ENCODE measurements at regions of chr2 and their contacts with region 1.

Region 1: GRCh38 chr2:55268907-55269644 is at the start of gene MTIF2:
- DNase-seq: peak; percentile 94
- ATAC-seq: peak; percentile 95
- H3K4me3 Mint-ChIP-seq: peak within 1 kb of the TSS; percentile 96
- H3K27ac Mint-ChIP-seq: peak within 1 kb of the TSS; percentile 95
- H3K4me1 Mint-ChIP-seq: peaks cover 10% of the 10 kb centered on the region
- H3K27me3 Mint-ChIP-seq: no peaks in the 10 kb centered on the region
- total RNA-seq, gene MTIF2: 37.3 to 43.2 TPM

Region 2: DNA sequence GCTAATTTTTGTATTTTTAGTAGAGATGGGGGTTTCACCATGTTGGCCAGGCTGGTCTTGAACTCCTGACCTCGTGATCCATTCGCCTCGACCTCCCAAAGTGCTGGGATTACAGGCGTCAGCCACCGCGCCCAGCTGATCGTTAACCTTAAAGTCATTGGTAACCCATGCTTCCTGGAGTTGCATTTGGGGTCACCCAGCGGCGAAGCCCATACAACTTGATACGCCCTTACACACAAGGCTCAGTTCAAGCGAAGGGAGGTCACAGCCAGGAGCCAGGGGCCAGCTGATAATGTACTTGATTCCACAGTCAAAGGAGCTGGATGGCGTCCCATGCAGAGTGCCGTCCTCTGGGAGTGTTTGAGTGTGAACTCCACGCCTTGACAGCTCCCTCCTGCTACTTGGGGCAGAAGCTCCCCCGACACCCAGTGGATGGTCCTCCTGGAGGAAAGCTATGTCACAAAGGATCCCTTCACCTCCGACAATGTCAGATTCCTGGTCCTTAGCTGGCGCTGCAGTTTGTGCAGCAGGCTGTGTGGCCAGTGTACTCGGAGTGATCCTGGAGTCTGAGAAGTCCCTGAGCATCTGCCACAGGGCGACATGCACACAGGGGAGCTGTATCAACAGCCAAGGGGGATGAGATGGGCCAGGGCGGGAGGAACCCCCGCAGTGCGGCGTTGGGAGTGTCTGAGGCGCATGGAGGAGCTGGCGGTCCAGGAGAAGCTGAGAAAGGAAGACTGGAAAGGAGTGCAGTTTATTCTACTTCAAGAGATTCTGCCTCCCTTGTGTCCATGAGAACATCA is 44.9 kb before region 1 on chr2:
- CTCF ChIA-PET with region 1: no interaction called
- POLR2A ChIA-PET with region 1: no interaction called
- intact Hi-C with region 1: loop called in 1 of 2 experiments (anchors 2 kb)
- DNase-seq: no peak
- ATAC-seq: no peak
- H3K4me3 Mint-ChIP-seq: peak overlapping the region; percentile 66
- H3K27ac Mint-ChIP-seq: peak overlapping the region; percentile 76
- H3K4me1 Mint-ChIP-seq: peaks cover 38% of the 10 kb centered on the region
- H3K27me3 Mint-ChIP-seq: no peaks in the 10 kb centered on the region

Region 3: GRCh38 chr2:55282110-55282917 is 13.2 kb after region 1 on chr2:
- CTCF ChIA-PET with region 1: interaction called, 3 read pairs
- POLR2A ChIA-PET with region 1: no interaction called
- intact Hi-C with region 1: loop called (anchors 1 kb)
- DNase-seq: peak; percentile 91
- ATAC-seq: peak; percentile 99
- H3K4me3 Mint-ChIP-seq: peak overlapping the region; percentile 86
- H3K27ac Mint-ChIP-seq: peak overlapping the region; percentile 94
- H3K4me1 Mint-ChIP-seq: peaks cover 14% of the 10 kb centered on the region
- H3K27me3 Mint-ChIP-seq: no peaks in the 10 kb centered on the region

Region 4: DNA sequence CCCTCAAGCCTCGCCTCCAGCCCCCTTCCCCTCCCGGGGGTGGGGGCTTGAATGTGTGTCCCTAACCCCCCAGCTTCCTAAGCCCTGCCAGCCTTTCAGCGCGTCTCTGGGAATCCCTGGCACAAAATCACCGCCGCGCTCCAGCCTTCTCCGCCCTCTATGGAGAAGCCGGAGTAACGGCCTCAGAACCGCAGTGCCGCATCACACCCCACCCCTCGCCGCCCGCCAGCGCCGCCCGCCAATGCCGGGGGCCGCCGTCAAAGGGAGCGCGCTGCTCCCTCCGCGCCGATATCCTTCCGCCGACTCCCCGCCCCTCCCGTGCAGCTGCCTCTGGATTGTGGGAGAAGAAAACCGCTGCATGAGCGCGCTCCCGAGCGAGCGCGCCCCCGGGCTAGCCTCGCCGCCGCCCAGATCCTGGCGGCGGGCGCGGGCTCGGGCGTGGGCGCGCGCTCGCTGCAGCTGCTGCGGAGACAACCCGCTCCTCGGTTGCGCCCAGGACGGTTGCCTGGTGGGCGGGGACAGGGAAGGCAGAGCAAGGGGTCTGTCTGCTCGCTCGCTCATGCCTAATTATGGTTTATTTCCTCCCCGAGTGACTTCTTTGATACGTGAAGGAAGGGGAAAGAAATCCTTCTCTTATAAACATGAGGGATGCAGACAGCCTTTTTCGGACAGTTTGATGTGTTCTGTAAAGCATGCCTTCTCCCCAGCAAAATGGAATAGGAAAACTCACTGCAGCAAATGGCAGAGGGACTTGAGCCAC is 150.8 kb after region 1 on chr2 and contains the start of gene CCDC88A:
- CTCF ChIA-PET with region 1: no interaction called
- POLR2A ChIA-PET with region 1: interaction called, 3 read pairs
- intact Hi-C with region 1: loop called (anchors 1 to 2 kb)
- DNase-seq: peak; percentile 92
- ATAC-seq: peak; percentile 88
- H3K4me3 Mint-ChIP-seq: peak within 1 kb of the TSS; percentile 77
- H3K27ac Mint-ChIP-seq: peak within 1 kb of the TSS; percentile 69
- H3K4me1 Mint-ChIP-seq: peaks cover 34% of the 10 kb centered on the region
- H3K27me3 Mint-ChIP-seq: peaks cover 13% of the 10 kb centered on the region
- total RNA-seq, gene CCDC88A: 10.1 to 11.3 TPM

Region 5: GRCh38 chr2:55693181-55694134 is 424.4 kb after region 1 on chr2 and contains the start of gene PNPT1:
- CTCF ChIA-PET with region 1: no interaction called
- POLR2A ChIA-PET with region 1: no interaction called
- intact Hi-C with region 1: loop called in 1 of 2 experiments (anchors 2 kb)
- DNase-seq: peak; percentile 97
- ATAC-seq: peak; percentile 100
- H3K4me3 Mint-ChIP-seq: peak within 1 kb of the TSS; percentile 98
- H3K27ac Mint-ChIP-seq: peak within 1 kb of the TSS; percentile 96
- H3K4me1 Mint-ChIP-seq: peaks cover 32% of the 10 kb centered on the region
- H3K27me3 Mint-ChIP-seq: no peaks in the 10 kb centered on the region
- total RNA-seq, gene PNPT1: 41.1 to 54.0 TPM